ENCODE measurements at regions of chr12 and their contacts with region 1.

Region 1: DNA sequence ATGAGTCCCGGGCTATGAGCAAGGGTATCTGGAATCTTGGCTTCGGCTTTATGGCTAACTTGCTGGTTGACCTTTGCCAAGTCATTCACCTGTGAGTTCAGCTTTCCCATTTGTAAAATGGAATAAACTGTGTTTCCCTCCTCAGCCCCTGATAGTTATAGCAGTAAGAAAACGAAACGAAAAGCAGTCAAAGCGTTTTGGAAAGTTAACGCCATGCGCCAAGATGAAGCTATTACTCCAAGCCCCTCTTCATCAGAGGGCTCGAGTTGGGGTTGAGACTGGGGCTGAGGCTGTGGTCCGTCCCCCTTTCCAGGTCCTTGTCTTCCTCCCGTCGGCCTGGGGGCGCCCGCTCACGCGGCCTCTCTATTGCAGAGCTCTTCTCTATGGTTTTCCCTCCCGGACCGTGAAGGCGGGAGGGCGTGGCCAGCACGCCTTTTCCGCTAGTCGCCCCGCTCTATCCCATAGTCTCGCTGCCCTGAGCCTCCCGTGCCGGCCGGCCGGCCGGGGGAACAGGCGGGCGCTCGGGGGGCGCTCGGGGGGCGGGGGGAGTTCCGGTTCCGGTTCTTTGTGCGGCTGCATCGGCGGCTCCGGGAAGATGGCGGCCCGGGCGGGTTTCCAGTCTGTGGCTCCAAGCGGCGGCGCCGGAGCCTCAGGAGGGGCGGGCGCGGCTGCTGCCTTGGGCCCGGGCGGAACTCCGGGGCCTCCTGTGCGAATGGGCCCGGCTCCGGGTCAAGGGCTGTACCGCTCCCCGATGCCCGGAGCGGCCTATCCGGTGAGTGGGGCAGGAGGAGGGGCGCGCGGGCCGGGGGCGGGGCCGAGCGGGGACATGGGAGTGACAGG is at the start of gene SMARCD1:
- DNase-seq: peak; percentile 93
- CTCF ChIP-seq: peak; percentile 82

Region 2: GRCh38 chr12:50174971-50175715 is 90.1 kb after region 1 on chr12:
- in situ Hi-C with region 1: loop called (anchors 5 kb)
- DNase-seq: peak; percentile 49
- CTCF ChIP-seq: peak; percentile 18